ENCODE measurements at regions of chr9 and their contacts with region 1.

Region 1: DNA sequence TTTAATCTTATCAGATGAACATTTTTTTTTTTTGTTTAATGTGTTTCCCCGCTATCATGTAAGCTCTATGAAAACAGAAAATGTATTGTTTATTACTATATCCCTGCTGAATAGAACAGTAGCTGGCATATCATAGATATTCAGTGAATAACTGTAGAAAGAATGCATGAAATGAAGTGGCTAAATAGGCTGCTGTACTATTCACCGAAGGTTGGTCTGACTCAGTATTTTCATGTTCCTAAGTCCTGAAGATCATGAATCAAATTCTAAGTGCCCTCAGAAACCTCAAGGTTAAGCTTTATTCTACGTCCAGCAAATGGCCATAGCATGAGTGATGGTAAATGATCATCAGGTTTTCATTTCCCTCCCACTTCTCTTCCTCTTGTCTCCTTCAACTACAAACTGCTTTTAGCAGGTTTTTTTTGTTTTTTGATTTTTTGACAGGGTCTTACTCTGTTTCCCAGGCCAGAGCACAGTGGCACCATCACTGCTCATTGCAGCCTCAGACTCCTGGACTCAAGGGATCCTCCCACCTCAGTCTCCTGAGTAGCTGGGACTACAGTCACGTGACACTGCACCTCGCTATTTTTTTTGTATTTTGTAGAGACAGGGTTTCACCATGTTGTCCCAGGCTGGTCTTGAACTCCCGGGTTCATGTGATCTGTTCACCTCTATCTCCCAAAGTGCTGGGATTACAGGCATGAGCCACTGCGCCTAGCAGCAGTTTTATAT is 19.1 kb upstream of the ZFAND5 start:
- DNase-seq: no peak
- H3K4me3 ChIP-seq: no peak overlapping the region
- H3K4me1 ChIP-seq: peaks cover 19% of the 10 kb centered on the region
- H3K27me3 ChIP-seq: no peaks in the 10 kb centered on the region

Region 2: GRCh38 chr9:72577212-72577753 is 193.1 kb after region 1 on chr9:
- in situ Hi-C with region 1: loop called (anchors 10 kb)
- DNase-seq: peak; percentile 51 to 88
- H3K4me3 ChIP-seq: no peak overlapping the region; the same call in 1 of the 2 replicates
- H3K4me1 ChIP-seq: peaks cover 68% of the 10 kb centered on the region
- H3K27me3 ChIP-seq: no peaks in the 10 kb centered on the region